Tibial artery (tissue), 4 donors: ENCODE measurements at regions of chr13 and their contacts with region 1.

Region 1: GRCh38 chr13:113996081-113996921 is 22.4 kb upstream of the C13orf46 start:
- DNase-seq: no peak
- H3K4me3 ChIP-seq: no peak overlapping the region
- H3K27ac ChIP-seq: no peak overlapping the region
- H3K4me1 ChIP-seq: peaks cover 0 to 13% (median 10%) of the 10 kb centered on the region in 4 donors
- H3K27me3 ChIP-seq: no peaks in the 10 kb centered on the region
- CTCF ChIP-seq: no peak

Region 2: DNA sequence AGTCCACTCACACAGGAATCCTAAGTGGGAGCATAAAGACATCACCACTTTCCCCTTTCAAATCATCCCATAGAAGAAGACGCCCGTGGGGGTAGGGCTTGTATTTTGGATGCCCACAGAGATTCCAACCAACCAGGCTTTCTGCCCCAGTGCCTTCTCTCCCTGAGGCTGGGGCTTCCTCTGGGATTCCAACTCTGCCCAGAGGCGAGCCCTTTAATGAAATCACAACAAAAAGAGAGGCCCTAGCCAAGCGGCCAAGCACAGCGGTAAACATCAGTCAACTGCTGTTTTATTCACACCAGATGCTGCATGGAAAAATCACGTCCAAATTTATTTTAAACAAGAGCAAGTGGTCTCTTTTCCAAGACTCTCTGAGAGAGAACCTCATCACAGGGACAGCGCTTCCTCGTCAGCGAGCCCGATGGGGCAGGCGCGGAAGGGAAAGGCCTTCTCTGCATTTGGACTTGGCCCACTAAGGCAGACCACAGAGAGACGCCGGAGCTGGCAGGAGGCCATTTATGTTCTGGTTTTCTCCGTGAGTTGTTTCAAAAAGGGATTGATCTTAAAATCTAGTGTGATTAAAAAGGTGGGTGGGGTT is 574.5 kb before region 1 on chr13:
- intact Hi-C with region 1: no loop called
- DNase-seq: no peak
- H3K4me3 ChIP-seq: peak overlapping the region in 1 of 2 donors; percentile 14
- H3K27ac ChIP-seq: peak overlapping the region; percentile 73 to 79
- H3K4me1 ChIP-seq: peaks cover 0 to 17% (median 12%) of the 10 kb centered on the region in 4 donors
- H3K27me3 ChIP-seq: no peaks in the 10 kb centered on the region
- CTCF ChIP-seq: no peak

Region 3: DNA sequence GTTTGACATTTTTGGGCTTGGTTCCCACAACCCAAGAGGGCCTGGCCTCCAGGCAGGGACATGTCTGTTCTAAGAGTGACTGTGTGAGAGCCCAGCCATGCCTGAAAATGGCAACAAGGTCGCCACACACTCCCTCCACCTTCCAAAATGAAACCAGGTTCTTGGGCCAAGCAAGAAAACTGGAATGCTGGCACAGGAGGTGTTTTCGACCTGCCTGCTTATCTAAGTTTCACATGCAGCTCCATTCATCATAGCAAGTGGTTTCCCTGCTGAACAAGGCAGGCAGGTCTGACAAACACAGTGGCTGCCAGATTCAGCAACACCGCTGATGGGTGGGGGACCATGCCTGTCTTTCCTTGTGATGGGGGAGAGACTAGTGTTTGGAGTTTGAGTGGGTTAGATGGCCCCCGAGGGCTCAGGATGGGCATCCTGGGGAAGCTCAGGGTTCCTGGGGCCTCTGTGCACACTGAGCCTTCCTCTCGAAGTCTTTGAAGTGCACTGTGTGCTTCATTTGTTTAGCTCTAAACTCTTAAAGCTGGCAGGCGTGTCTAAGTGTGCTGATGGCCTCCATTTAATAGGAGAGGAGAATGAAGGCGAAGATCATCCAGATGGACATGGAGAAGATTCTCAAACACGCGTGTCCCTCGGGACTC is 114.6 kb before region 1 on chr13:
- intact Hi-C with region 1: no loop called
- DNase-seq: peak in 1 of 2 donors; percentile 68
- H3K4me3 ChIP-seq: no peak overlapping the region
- H3K27ac ChIP-seq: peak overlapping the region; percentile 61 to 71
- H3K4me1 ChIP-seq: peaks cover 0 to 43% (median 24%) of the 10 kb centered on the region in 4 donors
- H3K27me3 ChIP-seq: no peaks in the 10 kb centered on the region
- CTCF ChIP-seq: no peak

Region 4: DNA sequence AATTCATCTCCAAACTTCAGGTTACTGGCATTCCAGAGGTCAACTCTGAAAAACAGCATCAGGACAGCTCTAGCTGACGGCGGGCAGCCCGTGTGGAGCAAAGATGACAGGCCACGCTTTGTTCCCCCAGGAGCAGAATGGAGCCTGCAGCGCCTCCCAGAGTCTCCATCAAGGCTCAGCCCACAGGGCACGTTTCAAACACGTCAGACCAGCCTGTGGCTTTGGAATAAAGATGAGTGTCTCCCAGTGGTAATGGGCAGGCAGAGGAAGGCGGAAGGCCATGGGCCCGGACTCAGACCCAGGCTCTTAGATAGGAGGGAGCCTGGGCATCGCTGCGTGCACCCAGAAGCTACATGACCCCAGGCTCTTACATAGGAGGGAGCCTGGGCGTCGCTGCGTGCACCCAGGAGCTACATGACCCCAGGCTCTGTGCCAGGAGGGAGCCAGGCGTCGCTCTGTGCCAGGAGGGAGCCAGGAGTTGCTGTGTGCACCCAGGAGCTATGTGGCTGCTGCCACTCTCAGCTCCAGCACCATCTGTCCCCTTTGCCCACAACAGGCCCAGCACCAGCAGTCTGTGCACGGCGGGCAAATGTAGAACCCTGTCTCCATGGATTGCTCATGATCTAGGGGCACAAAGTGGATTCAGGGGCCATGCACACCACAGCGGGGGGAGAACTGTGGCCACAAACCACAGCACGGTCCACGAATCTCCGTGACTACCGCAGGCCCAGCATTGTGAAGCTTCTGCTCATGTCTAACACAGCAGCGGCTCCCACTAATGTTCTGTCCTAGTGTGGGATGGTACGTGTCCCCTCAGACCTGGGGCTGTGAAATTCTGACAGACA is 25.4 kb after region 1 on chr13:
- intact Hi-C with region 1: loop called (anchors 1 kb)
- DNase-seq: peak in 1 of 2 donors; percentile 32
- H3K4me3 ChIP-seq: no peak overlapping the region
- H3K27ac ChIP-seq: no peak overlapping the region
- H3K4me1 ChIP-seq: peaks cover 0 to 11% (median 8%) of the 10 kb centered on the region in 4 donors
- H3K27me3 ChIP-seq: no peaks in the 10 kb centered on the region
- CTCF ChIP-seq: no peak

Region 5: DNA sequence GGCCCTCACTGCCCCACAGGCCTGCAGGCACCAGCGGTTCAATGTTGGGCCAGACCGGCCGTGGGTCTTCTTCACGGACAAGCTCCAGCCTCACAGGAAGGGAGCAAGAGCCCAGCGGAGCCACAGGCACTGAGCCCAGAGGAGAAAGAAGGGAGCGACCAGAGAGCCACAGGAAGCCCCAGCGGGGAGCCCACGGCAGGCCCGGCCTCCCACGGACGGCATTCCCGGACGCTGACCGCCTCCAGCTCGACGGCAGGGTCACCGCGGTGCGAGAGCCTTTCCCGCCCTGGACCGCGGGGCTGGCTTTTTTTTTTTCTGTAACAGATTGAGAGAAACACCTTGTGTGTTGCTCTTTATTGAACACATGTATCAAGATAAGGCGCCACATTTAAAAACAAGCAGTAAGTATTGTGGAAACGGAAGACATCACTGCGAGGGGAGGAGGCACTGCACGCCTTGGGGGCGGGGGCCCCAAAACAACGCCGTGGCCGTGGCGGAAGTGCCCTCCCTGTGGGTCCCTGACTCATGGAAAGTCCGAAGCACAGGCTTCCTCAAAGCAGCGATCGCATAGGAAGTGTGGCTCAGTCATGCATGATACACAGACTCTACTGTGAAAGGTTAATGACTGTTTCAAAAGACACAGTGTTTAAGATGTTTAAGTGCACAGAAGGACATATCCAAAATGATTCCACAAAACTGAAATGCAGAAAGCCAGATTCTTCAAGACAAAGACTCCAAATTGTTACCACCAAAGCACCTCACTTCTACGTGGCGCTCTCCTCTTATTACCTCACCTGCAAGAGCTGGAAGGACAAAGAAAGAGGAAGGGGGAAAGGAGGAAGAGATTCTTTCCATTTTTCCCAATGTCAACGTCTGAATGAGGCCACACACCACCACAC is 132.6 kb after region 1 on chr13:
- intact Hi-C with region 1: no loop called
- DNase-seq: peak; percentile 86 to 87
- H3K4me3 ChIP-seq: peak overlapping the region; percentile 14 to 32
- H3K27ac ChIP-seq: peak overlapping the region; percentile 79 to 84
- H3K4me1 ChIP-seq: peaks cover 0 to 45% (median 42%) of the 10 kb centered on the region in 4 donors
- H3K27me3 ChIP-seq: no peaks in the 10 kb centered on the region
- CTCF ChIP-seq: no peak